ENCODE measurements at regions of chr1 and their contacts with region 1.

Region 1: DNA sequence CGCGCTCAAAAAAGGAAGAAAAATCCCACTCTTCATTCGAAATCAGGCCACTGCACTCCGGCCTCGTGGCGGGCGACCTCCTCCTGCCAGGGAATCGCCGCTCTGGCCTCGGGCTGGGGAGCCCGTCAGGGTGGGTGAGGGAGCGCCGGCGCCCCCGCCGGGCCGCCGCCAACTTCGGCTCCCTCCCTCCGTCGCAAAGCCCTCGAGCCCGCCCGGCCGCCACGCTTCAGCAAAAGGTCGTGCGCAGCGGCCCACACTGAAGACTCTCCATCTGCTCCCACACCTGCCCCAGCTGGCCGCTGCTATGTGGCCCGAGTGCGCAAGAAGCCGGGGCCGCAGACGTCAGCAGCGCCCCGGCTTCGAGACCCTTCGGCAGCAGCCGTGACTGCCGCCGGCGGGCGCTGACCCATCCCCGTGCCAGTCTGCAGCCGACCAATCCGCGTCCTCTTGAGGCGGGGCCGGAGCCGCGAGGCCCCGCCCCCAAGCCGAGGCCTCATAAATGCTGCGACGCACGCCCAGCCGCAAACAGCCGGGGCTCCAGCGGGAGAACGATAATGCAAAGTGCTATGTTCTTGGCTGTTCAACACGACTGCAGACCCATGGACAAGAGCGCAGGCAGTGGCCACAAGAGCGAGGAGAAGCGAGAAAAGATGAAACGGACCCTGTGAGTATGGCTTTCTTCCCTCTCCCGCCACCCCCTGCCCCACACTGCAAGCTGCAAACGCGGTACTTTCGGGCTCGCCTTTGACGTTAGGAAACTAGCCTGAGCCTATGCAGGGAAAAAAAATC is at the start of gene RGS2:
- DNase-seq: peak; percentile 66
- ATAC-seq: peak; percentile 98
- H3K4me3 ChIP-seq: peak within 1 kb of the TSS; percentile 28 to 62 (median 61); a peak in 5 of 6 replicates
- H3K27ac ChIP-seq: no peak within 1 kb of the TSS
- H3K4me1 ChIP-seq: peaks cover 29% of the 10 kb centered on the region
- H3K27me3 ChIP-seq: peaks cover 0 to 4% of the 10 kb centered on the region in 2 experiments; a peak in 1 of 5 replicates
- CTCF ChIP-seq: peak; percentile 64
- EP300 ChIP-seq: no peak
- POLR2A ChIP-seq: peak; percentile 73 to 77
- RAD21 ChIP-seq: peak; percentile 33; the same call in 1 of the 2 replicates
- total RNA-seq, gene RGS2: 0.64 and 0.86 TPM in 2 replicates

Region 2: DNA sequence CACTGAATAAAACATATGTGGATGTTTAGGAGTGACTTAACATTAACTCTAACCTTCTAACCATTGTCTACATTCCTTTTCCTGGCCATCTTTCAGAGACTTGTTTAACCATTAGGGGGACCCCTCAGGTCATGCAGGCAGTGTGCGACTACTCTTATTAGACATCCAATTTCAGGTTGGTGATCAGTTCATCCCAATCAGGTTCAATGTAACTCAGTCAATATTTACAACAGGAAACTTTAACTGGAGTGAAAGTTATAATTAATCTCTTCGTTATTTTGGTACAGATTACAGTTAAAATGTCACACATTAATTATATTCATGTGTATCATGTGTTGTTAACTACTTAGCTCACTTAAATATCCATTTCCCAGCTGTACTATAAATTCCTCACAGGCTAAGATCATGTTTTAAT is 302.0 kb before region 1 on chr1:
- CTCF ChIA-PET with region 1: no interaction called
- POLR2A ChIA-PET with region 1: no interaction called
- in situ Hi-C with region 1: no loop called
- intact Hi-C with region 1: loop called (anchors 2 kb)
- DNase-seq: peak; percentile 33
- ATAC-seq: peak; percentile 85
- H3K4me3 ChIP-seq: no peak overlapping the region
- H3K27ac ChIP-seq: no peak overlapping the region
- H3K4me1 ChIP-seq: no peaks in the 10 kb centered on the region
- H3K27me3 ChIP-seq: no peaks in the 10 kb centered on the region
- CTCF ChIP-seq: peak; percentile 63
- EP300 ChIP-seq: no peak
- POLR2A ChIP-seq: no peak
- RAD21 ChIP-seq: no peak

Region 3: GRCh38 chr1:192639607-192640368 is 168.9 kb before region 1 on chr1:
- CTCF ChIA-PET with region 1: no interaction called
- POLR2A ChIA-PET with region 1: no interaction called
- in situ Hi-C with region 1: no loop called
- intact Hi-C with region 1: loop called (anchors 10 kb)
- DNase-seq: no peak
- ATAC-seq: no peak
- H3K4me3 ChIP-seq: no peak overlapping the region
- H3K27ac ChIP-seq: no peak overlapping the region
- H3K4me1 ChIP-seq: peaks cover 6% of the 10 kb centered on the region
- H3K27me3 ChIP-seq: no peaks in the 10 kb centered on the region
- CTCF ChIP-seq: no peak
- EP300 ChIP-seq: no peak
- POLR2A ChIP-seq: no peak
- RAD21 ChIP-seq: no peak

Region 4: GRCh38 chr1:192831706-192832355 is 23.1 kb after region 1 on chr1:
- CTCF ChIA-PET with region 1: no interaction called
- POLR2A ChIA-PET with region 1: no interaction called
- in situ Hi-C with region 1: no loop called
- intact Hi-C with region 1: no loop called
- DNase-seq: no peak
- ATAC-seq: no peak
- H3K4me3 ChIP-seq: no peak overlapping the region
- H3K27ac ChIP-seq: no peak overlapping the region
- H3K4me1 ChIP-seq: no peaks in the 10 kb centered on the region
- H3K27me3 ChIP-seq: no peaks in the 10 kb centered on the region; a peak in 1 of 5 replicates
- CTCF ChIP-seq: no peak
- EP300 ChIP-seq: no peak
- POLR2A ChIP-seq: no peak
- RAD21 ChIP-seq: no peak

Region 5: GRCh38 chr1:192927496-192927895 is 118.8 kb after region 1 on chr1:
- CTCF ChIA-PET with region 1: no interaction called
- POLR2A ChIA-PET with region 1: no interaction called
- in situ Hi-C with region 1: no loop called
- intact Hi-C with region 1: no loop called
- DNase-seq: no peak
- ATAC-seq: no peak
- H3K4me3 ChIP-seq: no peak overlapping the region
- H3K27ac ChIP-seq: no peak overlapping the region
- H3K4me1 ChIP-seq: no peaks in the 10 kb centered on the region
- H3K27me3 ChIP-seq: no peaks in the 10 kb centered on the region
- CTCF ChIP-seq: no peak
- EP300 ChIP-seq: no peak
- POLR2A ChIP-seq: no peak
- RAD21 ChIP-seq: no peak

Region 6: GRCh38 chr1:193019442-193020026 is 210.8 kb after region 1 on chr1:
- CTCF ChIA-PET with region 1: interaction called, 10 read pairs
- POLR2A ChIA-PET with region 1: no interaction called
- in situ Hi-C with region 1: loop called (anchors 5 kb)
- intact Hi-C with region 1: loop called (anchors 1 kb)
- DNase-seq: peak; percentile 41
- ATAC-seq: no peak
- H3K4me3 ChIP-seq: no peak overlapping the region
- H3K27ac ChIP-seq: no peak overlapping the region
- H3K4me1 ChIP-seq: 0 out of 2 replicates have a peak, but pooled peaks cover 4% of the 10 kb centered on the region
- H3K27me3 ChIP-seq: no peaks in the 10 kb centered on the region
- CTCF ChIP-seq: peak; percentile 62
- EP300 ChIP-seq: no peak
- POLR2A ChIP-seq: no peak
- RAD21 ChIP-seq: no peak

Region 7: DNA sequence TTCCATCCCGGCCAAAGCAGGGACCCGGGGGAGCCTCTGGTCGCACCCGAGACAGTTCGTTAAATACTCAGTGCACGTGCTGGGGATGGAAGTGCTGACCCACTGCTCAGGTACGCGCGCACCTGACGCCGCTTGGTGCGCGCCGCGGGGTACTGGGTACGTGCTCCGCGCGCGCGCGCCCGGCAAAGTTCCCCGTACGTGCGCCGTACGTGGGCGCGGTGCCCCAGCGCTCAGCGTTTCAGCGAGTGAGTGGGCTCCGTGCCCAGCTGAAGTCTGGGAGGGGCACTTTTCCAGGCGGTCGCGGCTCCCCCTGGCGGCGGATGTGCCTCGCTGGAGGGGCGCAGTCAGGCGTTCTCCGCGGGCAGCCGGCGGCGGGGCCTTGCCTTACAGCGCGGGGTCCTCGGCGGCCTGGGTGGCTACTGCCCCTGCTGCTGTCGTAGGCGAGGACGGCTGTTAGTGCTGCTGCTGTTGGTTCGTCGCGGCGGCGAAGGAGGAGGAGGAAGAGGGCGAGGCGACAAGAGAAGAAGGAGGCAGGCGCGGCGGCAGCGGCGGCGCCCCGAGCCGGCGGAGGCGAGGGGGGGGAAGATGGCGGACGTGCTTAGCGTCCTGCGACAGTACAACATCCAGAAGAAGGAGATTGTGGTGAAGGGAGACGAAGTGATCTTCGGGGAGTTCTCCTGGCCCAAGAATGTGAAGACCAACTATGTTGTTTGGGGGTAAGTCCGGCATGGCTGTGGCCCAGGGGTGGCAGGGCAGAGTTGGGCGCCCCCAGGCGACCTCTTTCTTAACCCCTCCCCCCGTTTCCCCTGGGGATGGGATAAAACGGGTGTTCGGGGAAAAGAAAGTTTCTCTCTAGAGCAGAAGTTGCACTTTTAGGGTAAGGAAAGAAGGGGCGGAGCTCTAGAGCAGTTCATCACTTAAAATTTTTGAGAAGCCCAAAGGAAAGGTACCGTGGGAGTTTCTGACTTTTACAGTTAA is 313.2 kb after region 1 on chr1 and contains the start of gene CDC73:
- CTCF ChIA-PET with region 1: no interaction called
- POLR2A ChIA-PET with region 1: no interaction called
- in situ Hi-C with region 1: loop called (anchors 10 kb)
- intact Hi-C with region 1: loop called (anchors 5 kb)
- DNase-seq: peak; percentile 89
- ATAC-seq: peak; percentile 97
- H3K4me3 ChIP-seq: peak within 1 kb of the TSS; percentile 85 to 98 (median 94)
- H3K27ac ChIP-seq: peak within 1 kb of the TSS; percentile 91
- H3K4me1 ChIP-seq: peaks cover 32% of the 10 kb centered on the region
- H3K27me3 ChIP-seq: no peaks in the 10 kb centered on the region; a peak in 2 of 5 replicates
- CTCF ChIP-seq: peak; percentile 98
- EP300 ChIP-seq: peak in 1 of 2 experiments; percentile 47; a peak in 3 of 4 replicates
- POLR2A ChIP-seq: peak; percentile 72 to 80
- RAD21 ChIP-seq: peak; percentile 99
- total RNA-seq, gene CDC73: 26.3 and 38.3 TPM in 2 replicates

Measured in HepG2 (cell line).